Psoas muscle (tissue), 8 donors: ENCODE measurements at regions of chr12 and their contacts with region 1.

Region 1: GRCh38 chr12:108562348-108563135 is at the start of gene ISCU:
- DNase-seq: peak; percentile 99
- ATAC-seq: peak; percentile 87 to 90 (median 88)
- H3K4me3 ChIP-seq: peak within 1 kb of the TSS; percentile 76
- H3K27ac ChIP-seq: peak within 1 kb of the TSS; percentile 97
- H3K4me1 ChIP-seq: peaks cover 55% of the 10 kb centered on the region
- H3K27me3 ChIP-seq: no peaks in the 10 kb centered on the region
- CTCF ChIP-seq: no peak
- total RNA-seq, gene ISCU: 148 to 225 (median 212) TPM

Region 2: GRCh38 chr12:108029051-108029835 is 533.3 kb before region 1 on chr12:
- intact Hi-C with region 1: no loop called
- DNase-seq: no peak
- ATAC-seq: no peak
- H3K4me3 ChIP-seq: no peak overlapping the region
- H3K27ac ChIP-seq: no peak overlapping the region
- H3K4me1 ChIP-seq: no peaks in the 10 kb centered on the region
- H3K27me3 ChIP-seq: peaks cover 0 to 16% (median 6%) of the 10 kb centered on the region in 3 donors
- CTCF ChIP-seq: no peak

Region 3: GRCh38 chr12:109093022-109093918 is 530.7 kb after region 1 on chr12 and contains the start of gene ALKBH2:
- intact Hi-C with region 1: loop called in 1 of 2 experiments (anchors 5 kb)
- DNase-seq: peak; percentile 96 to 97
- ATAC-seq: peak; percentile 84 to 85 (median 84)
- H3K4me3 ChIP-seq: peak within 1 kb of the TSS; percentile 75
- H3K27ac ChIP-seq: peak within 1 kb of the TSS; percentile 82
- H3K4me1 ChIP-seq: peaks cover 13% of the 10 kb centered on the region
- H3K27me3 ChIP-seq: no peaks in the 10 kb centered on the region
- CTCF ChIP-seq: peak; percentile 97
- total RNA-seq, gene ALKBH2: 7.3 to 25.3 (median 17.7) TPM